GM12878 (cell line): ENCODE measurements at regions of chr9 and their contacts with region 1.

Region 1: GRCh38 chr9:128370826-128371621 is at the start of gene URM1:
- DNase-seq: peak; percentile 73
- ATAC-seq: peak; percentile 98
- H3K4me3 ChIP-seq: peak within 1 kb of the TSS; percentile 99
- H3K27ac ChIP-seq: peak within 1 kb of the TSS; percentile 89
- H3K4me1 ChIP-seq: no peaks in the 10 kb centered on the region
- H3K27me3 ChIP-seq: no peaks in the 10 kb centered on the region
- CTCF ChIP-seq: peak in 1 of 3 experiments; percentile 9; a peak in 1 of 6 replicates
- EP300 ChIP-seq: no peak
- POLR2A ChIP-seq: peak; percentile 90
- RAD21 ChIP-seq: no peak
- polyA plus RNA-seq, gene URM1: 7.9 to 14.1 TPM

Region 2: DNA sequence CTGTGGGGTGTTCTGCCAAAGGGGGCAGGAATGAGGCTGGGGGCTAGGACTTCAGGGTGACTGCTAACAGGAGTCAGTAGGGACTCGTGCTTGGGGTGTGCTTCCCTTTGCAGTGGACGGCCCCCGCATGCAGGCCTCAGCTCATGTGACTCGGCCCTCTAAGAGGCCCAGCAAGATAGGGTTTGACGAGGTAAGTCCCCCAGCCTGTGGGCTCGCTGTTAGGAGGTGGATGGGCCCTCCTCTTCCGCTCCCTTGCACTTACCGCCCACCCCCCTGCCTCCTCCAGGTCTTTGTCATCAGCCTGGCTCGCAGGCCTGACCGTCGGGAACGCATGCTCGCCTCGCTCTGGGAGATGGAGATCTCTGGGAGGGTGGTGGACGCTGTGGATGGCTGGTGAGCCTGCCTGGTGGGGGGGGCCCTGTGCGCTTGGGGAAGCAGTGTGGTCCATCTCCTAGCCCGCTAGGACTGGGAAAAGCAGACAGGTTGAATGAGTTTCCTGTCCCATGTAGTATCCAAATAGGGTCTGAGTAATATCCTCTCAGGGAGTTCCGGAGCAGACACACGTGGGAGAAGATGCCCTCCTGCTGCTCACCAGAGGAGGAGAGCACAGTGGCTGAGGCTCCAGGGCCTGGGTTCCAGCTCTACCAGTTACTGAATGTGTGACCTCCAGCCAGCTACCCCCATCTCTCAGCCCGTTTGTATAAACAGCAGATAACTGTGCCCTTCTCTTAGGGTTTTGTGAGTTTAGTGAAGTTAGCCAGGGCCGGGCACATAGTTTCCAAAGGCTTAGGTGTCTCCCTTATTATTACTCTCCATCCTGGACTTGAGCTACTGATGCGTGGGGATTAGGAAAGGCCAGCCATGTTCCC is 57.9 kb after region 1 on chr9:
- CTCF ChIA-PET with region 1: no interaction called
- POLR2A ChIA-PET with region 1: no interaction called
- RAD21 ChIA-PET with region 1: no interaction called
- SMC1A ChIA-PET with region 1: no interaction called
- in situ Hi-C with region 1: no loop called
- intact Hi-C with region 1: no loop called
- DNase-seq: no peak
- ATAC-seq: no peak
- H3K4me3 ChIP-seq: no peak overlapping the region
- H3K27ac ChIP-seq: no peak overlapping the region
- H3K4me1 ChIP-seq: no peaks in the 10 kb centered on the region
- H3K27me3 ChIP-seq: no peaks in the 10 kb centered on the region
- CTCF ChIP-seq: no peak
- EP300 ChIP-seq: no peak
- POLR2A ChIP-seq: no peak
- RAD21 ChIP-seq: no peak

Region 3: DNA sequence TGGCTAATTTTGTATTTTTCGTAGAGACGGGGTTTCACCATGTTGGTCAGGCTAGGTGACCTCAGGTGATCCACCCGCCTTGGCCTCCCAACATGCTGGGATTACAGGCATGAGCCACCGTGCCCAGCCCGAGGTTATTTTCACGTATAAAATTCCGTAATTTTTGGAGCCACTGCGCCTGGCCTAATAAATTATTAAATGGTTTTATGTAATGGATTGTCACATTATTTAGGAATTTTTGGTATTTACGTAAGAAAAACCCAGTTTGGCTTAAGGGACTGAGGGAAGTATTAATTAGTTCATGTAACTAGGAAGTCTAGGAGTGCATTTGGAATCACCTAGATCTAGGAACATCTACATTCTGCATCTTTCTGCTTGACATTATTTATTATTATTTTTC is 141.8 kb after region 1 on chr9:
- CTCF ChIA-PET with region 1: no interaction called
- POLR2A ChIA-PET with region 1: interaction called, 13 read pairs
- RAD21 ChIA-PET with region 1: no interaction called
- SMC1A ChIA-PET with region 1: no interaction called
- in situ Hi-C with region 1: no loop called
- intact Hi-C with region 1: no loop called
- DNase-seq: no peak
- ATAC-seq: no peak
- H3K4me3 ChIP-seq: no peak overlapping the region
- H3K27ac ChIP-seq: no peak overlapping the region
- H3K4me1 ChIP-seq: no peaks in the 10 kb centered on the region
- H3K27me3 ChIP-seq: no peaks in the 10 kb centered on the region
- CTCF ChIP-seq: no peak
- EP300 ChIP-seq: no peak
- POLR2A ChIP-seq: no peak
- RAD21 ChIP-seq: no peak